ENCODE measurements at regions of chr13 and their contacts with region 1.

Region 1: DNA sequence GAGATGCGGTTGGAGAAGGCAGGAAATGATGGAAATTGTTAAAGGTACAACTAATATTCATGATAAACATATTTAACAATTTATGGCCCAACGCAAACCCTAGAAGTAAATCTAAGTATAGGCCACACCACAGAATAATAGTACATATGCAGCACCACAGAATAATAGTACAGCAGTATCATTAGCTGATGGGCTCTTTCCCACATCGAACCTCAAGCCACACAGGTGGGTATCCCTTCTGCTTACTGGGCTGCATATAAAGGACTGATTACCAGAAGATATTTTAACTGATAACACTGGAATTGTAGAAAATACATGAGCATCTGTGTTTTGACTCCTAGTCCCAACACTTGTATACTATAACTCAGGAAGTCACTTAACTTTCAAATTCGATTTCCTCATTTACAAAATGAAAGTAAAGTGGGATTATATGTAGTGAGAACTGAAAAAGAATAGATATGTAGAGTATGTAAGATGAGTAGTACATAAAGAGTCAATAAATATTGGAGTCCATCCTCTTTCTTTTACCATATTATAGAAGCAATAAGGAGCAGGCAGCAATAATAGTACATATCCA is 91.5 kb downstream of the TSC22D1 start:
- DNase-seq: no peak
- ATAC-seq: no peak
- H3K4me3 ChIP-seq: peak overlapping the region; percentile 7
- H3K27ac ChIP-seq: no peak overlapping the region
- H3K4me1 ChIP-seq: peaks cover 15% of the 10 kb centered on the region
- H3K27me3 ChIP-seq: no peaks in the 10 kb centered on the region
- CTCF ChIP-seq: no peak

Region 2: DNA sequence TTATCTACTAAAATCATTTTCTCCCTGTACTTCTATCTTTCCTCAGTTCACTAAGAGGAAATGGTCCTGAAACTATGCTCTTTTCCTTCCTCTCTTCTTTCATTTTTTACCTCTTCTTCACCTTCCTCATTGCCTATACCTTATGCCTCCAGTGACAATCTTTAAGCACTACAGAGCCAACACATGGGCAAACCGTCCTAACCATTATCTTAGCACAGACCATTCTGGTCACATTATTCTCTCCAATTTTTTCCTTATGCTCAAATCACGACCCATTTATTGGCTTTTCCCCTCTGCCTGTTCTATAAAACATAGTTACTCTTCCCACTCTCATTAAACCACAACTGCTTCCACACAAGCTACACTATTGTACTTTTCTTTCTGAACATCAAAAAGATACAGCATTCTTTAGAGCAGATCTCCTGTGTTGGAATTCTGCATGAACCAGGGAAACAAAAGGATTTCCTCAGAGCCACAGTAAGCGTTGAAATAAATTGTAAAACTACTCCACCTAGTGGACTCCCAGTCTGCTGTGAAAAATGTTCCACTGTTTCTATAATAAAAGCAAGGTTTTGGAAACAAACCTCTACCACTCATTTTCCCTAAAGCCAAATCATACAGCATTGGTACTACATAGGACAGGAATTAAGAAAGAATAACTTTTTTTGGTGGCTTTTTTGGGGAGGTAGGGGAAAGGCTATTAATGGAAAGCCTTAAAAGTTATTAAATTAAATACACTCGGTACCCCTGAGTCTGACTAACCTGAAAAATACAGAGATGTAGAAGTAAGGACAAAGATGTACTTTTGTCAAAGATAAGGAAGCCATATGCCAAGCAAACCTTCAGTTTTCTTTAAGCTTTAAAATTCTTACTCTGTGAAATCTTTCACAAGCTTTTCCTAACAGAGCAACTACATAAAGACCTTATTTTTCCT is 485.2 kb after region 1 on chr13:
- intact Hi-C with region 1: loop called (anchors 5 kb)
- DNase-seq: no peak
- ATAC-seq: peak in 1 of 2 donors; percentile 67
- H3K4me3 ChIP-seq: no peak overlapping the region
- H3K27ac ChIP-seq: no peak overlapping the region
- H3K4me1 ChIP-seq: peaks cover 14% of the 10 kb centered on the region
- H3K27me3 ChIP-seq: no peaks in the 10 kb centered on the region
- CTCF ChIP-seq: peak; percentile 81

Measured in lower lobe of right lung (tissue), 2 donors.